PC-9 (cell line): ENCODE measurements at regions of chr3 and their contacts with region 1.

Region 1: GRCh38 chr3:150546226-150547044 is at the starts of genes EIF2A and SERP1:
- DNase-seq: peak; percentile 96 to 99
- H3K4me3 ChIP-seq: peak within 1 kb of the TSS; percentile 82
- H3K27ac ChIP-seq: peak within 1 kb of the TSS; percentile 93
- H3K4me1 ChIP-seq: peaks cover 27% of the 10 kb centered on the region
- H3K27me3 ChIP-seq: no peaks in the 10 kb centered on the region
- CTCF ChIP-seq: no peak
- total RNA-seq, gene EIF2A: 96.4 and 102 TPM in 2 replicates
- total RNA-seq, gene SERP1: 106 and 113 TPM in 2 replicates

Region 2: DNA sequence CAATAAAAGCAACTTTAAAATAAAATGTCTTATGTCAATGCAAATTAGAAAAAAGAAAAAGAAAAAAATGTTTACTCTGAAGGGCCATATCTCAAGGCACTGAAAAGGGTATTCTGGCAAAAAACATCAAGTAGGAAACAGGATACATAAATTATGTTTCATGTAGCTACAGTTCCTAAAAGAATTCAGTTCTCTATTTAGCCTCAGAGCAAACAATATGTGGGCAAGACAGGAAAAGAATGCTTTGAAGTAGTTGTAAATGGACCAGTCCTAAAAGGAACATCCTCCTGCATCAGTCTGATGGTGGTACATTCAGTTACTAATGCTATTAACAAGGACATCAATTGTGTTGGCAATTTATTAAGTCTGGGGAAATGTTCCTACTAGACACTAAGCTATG is 802.3 kb before region 1 on chr3:
- CTCF ChIA-PET with region 1: no interaction called
- POLR2A ChIA-PET with region 1: no interaction called
- intact Hi-C with region 1: no loop called
- DNase-seq: no peak
- H3K4me3 ChIP-seq: no peak overlapping the region
- H3K27ac ChIP-seq: no peak overlapping the region
- H3K4me1 ChIP-seq: no peaks in the 10 kb centered on the region
- H3K27me3 ChIP-seq: no peaks in the 10 kb centered on the region
- CTCF ChIP-seq: no peak

Region 3: DNA sequence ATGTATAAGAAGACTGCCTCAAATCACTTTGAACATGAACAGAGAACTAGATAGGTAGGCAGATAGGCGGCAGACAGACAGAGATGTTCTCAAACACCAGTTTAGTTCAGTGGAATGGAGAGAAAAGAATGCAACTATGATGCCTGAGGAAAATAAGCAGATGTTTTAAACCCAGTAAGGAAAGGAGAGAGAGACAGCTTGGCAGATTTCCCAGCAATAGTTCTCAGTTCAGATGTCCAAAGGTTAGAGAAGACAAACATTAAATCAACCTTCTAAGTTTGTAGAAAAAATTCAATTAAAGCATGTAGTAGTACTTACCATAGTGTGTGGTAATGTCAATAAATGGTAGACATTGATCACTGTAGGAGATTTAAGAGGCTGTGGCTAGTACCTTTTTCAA is 366.1 kb before region 1 on chr3:
- CTCF ChIA-PET with region 1: no interaction called
- POLR2A ChIA-PET with region 1: no interaction called
- intact Hi-C with region 1: no loop called
- DNase-seq: no peak
- H3K4me3 ChIP-seq: no peak overlapping the region
- H3K27ac ChIP-seq: no peak overlapping the region
- H3K4me1 ChIP-seq: peaks cover 18% of the 10 kb centered on the region
- H3K27me3 ChIP-seq: no peaks in the 10 kb centered on the region
- CTCF ChIP-seq: no peak

Region 4: DNA sequence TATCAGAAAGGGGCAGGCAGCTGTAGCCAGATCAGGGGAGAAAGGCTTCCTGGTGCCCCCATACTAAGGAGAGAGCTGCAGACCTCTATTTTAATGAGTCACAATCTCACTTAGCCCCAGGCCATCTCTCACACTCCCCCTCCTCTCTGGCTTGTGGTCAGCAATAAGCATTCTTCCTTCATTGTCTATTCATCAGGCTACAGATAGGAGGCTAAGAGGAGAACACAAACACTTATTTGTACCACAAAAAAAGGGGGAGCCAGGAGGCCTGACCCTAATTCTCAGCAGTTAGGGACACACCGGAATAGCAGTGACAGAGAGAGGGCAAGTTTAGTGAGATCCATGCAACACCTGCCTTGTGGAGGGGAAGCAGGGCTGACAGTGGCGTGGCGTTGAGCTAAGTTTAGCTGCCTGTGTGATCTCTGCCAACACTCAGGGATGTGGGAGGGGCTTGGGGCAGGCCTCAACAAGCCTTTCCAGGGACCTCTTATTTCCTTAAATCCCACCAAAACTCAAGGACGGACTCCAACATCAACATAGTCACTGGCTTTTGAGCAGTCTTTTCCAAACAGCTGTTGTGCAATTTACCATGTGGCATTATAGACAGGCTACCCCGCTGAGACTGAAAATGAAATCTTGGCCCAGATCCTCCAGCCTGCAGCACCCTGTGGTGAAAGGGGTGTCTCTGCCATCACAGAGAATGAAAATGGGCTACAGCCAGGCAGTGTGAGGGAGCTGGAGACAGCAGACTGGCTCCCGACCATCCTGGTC is 330.2 kb before region 1 on chr3:
- CTCF ChIA-PET with region 1: no interaction called
- POLR2A ChIA-PET with region 1: no interaction called
- intact Hi-C with region 1: loop called (anchors 5 kb)
- DNase-seq: peak; percentile 48 to 63
- H3K4me3 ChIP-seq: no peak overlapping the region
- H3K27ac ChIP-seq: no peak overlapping the region
- H3K4me1 ChIP-seq: peaks cover 10% of the 10 kb centered on the region
- H3K27me3 ChIP-seq: no peaks in the 10 kb centered on the region
- CTCF ChIP-seq: no peak; the same call in 1 of the 2 replicates

Region 5: DNA sequence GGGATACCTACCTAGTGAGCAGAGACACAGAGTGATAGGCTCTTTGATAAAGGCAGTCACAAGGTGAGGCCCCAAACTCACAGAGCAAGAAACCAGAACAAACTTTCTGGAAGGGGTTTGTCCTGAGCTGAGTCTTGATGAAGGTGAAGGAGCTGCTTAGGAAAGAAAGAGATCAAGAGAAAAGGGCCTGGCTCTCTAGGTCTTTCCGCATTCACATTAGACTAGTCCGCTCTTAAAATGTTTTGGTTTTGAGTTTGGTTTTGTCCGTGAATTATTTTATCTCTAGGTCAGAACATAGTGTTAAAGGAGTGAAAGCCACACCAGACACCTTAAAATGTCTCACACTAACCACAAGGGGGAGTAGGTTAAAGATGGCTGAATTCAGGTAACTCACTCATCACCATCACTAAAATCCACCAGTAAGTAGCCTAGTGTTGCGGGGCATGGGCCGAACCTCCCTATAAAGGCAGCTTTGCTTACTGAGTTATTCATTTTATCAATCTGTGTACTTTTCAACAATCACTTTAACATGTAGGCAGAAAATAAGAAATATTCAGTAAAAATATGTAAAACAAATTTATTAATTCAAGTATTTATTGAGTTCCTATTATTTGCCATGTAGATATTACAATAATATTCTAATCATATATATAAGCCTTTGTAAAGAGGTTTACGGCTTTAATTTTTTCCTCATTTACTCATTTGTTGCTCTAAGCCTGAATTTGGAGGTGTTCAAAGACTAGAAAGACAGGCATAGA is 259.9 kb before region 1 on chr3:
- CTCF ChIA-PET with region 1: no interaction called
- POLR2A ChIA-PET with region 1: interaction called, 12 read pairs
- intact Hi-C with region 1: no loop called
- DNase-seq: peak; percentile 25 to 42
- H3K4me3 ChIP-seq: no peak overlapping the region
- H3K27ac ChIP-seq: peak overlapping the region; percentile 4; the same call in 1 of the 2 replicates
- H3K4me1 ChIP-seq: peaks cover 11% of the 10 kb centered on the region; the same call in 1 of the 2 replicates
- H3K27me3 ChIP-seq: no peaks in the 10 kb centered on the region
- CTCF ChIP-seq: peak; percentile 79

Region 6: DNA sequence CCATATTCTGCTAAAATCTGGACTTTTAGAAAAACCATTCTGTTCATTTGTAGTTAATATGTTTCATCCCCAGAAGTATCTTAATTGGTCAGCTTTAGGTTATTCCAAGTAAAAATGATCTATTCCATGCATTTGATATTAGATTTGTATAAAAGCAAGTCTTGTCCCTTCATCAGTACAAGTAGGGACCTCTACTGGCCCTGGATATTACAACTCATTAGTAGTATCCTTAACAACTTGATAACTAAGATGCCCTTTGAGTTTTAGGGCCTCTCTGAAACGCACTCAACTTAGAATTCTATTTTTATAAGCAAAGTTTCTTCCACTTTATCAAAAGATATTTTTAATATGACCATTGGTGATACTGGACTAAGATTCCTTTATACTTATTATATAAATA is 31.4 kb after region 1 on chr3:
- CTCF ChIA-PET with region 1: no interaction called
- POLR2A ChIA-PET with region 1: interaction called, 10 read pairs
- intact Hi-C with region 1: no loop called
- DNase-seq: no peak
- H3K4me3 ChIP-seq: no peak overlapping the region
- H3K27ac ChIP-seq: no peak overlapping the region
- H3K4me1 ChIP-seq: no peaks in the 10 kb centered on the region
- H3K27me3 ChIP-seq: no peaks in the 10 kb centered on the region
- CTCF ChIP-seq: no peak; the same call in 1 of the 2 replicates

Region 7: DNA sequence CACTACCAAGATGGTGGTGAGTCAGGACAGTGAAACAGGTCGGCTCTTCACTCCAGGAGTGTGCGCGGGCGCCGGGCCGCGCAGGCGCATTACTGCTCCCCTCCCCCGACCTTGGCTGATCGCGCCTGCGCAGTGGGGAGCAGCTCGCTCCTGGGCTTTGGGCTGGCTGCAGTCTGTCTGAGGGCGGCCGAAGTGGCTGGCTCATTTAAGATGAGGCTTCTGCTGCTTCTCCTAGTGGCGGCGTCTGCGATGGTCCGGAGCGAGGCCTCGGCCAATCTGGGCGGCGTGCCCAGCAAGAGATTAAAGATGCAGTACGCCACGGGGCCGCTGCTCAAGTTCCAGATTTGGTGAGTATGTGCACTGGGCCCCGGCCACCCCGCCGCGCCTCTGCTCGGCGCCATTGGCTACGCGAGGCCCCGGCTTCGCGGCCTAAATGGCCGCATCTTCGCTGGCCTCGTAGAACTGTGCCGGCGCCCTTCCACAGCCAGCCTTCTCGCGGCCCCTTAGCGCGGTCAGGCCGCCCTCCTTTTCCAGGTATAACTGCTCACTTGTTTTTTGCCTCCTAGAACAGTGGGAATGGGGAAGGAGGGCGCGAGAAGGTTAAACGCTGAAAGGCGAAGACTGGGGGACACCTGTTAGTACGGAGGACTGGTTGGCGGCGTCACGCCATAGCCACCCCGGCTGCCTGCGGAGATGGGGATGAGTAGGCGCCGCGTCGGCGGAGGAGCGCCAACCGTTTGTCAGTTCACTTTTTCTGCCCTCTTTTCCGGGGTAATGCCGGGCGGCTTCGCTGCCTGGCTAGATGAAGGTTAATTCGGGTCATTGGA is 56.9 kb after region 1 on chr3 and contains the start of gene SELENOT:
- CTCF ChIA-PET with region 1: no interaction called
- POLR2A ChIA-PET with region 1: interaction called, 3 read pairs
- intact Hi-C with region 1: loop called (anchors 1 kb)
- DNase-seq: peak; percentile 88 to 98
- H3K4me3 ChIP-seq: peak within 1 kb of the TSS; percentile 94
- H3K27ac ChIP-seq: peak within 1 kb of the TSS; percentile 93
- H3K4me1 ChIP-seq: peaks cover 53% of the 10 kb centered on the region
- H3K27me3 ChIP-seq: no peaks in the 10 kb centered on the region
- CTCF ChIP-seq: peak; percentile 31; the same call in 1 of the 2 replicates
- total RNA-seq, gene SELENOT: 59.5 and 84.1 TPM in 2 replicates

Region 8: DNA sequence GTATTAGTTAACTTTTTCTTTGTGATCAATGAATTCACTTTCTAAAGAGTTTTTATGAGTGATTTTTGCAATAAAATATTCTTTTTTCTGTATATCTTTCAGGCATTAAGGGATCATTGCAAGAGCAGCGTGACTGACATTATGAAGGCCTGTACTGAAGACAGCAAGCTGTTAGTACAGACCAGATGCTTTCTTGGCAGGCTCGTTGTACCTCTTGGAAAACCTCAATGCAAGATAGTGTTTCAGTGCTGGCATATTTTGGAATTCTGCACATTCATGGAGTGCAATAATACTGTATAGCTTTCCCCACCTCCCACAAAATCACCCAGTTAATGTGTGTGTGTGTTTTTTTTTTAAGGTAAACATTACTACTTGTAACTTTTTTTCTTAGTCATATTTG is 81.1 kb after region 1 on chr3:
- CTCF ChIA-PET with region 1: no interaction called
- POLR2A ChIA-PET with region 1: no interaction called
- intact Hi-C with region 1: no loop called
- DNase-seq: no peak
- H3K4me3 ChIP-seq: no peak overlapping the region
- H3K27ac ChIP-seq: no peak overlapping the region
- H3K4me1 ChIP-seq: no peaks in the 10 kb centered on the region
- H3K27me3 ChIP-seq: no peaks in the 10 kb centered on the region
- CTCF ChIP-seq: no peak

Region 9: DNA sequence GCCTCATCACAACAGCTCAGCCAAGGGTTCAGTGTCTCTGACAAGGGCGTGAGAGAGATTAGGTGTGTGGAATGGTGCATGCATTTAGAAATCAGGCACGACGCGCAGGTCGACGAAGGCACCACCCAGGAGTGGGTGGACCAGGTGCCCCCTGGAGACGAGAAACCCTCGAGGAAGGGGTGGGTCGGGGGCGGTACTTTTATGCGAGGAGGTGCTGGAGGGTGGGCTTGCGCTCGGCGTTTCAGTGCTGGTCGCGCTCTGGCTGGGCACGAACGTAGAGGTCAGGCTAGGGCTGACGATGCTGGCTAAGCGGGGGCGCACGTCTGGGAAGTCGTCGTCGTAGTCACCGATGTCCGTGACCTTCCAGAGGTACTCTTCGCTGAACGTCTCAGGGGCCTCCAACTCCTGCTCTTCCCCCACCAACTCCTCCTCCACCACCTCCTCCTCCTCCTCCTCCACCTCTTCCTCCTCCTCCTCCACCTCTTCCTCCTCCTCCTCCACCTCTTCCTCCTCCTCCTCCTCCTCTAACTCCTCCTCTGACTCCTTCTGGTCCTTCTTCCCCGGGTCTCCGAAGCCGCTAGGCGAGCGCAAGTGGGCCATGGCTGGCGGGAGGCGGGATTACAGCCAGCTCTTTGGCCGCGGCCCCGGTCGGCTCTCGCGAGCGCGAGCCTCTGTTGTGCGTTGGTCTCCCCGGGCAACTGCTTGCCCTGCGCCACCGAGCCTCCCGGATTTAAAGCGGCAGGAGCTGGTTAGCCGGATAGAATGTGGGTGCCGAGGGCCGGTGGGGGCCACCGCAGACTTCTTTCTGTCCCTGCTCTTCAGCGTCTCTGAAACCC is 157.1 kb after region 1 on chr3 and contains the start of gene ERICH6:
- CTCF ChIA-PET with region 1: no interaction called
- POLR2A ChIA-PET with region 1: interaction called, 4 read pairs
- intact Hi-C with region 1: loop called (anchors 5 kb)
- DNase-seq: peak; percentile 75 to 94
- H3K4me3 ChIP-seq: peak within 1 kb of the TSS; percentile 72
- H3K27ac ChIP-seq: peak within 1 kb of the TSS; percentile 36
- H3K4me1 ChIP-seq: no peaks in the 10 kb centered on the region
- H3K27me3 ChIP-seq: no peaks in the 10 kb centered on the region
- CTCF ChIP-seq: peak; percentile 21; the same call in 1 of the 2 replicates
- total RNA-seq, gene ERICH6: not detected in 2 replicates

Region 10: GRCh38 chr3:151327571-151328198 is 781.2 kb after region 1 on chr3:
- CTCF ChIA-PET with region 1: no interaction called
- POLR2A ChIA-PET with region 1: no interaction called
- intact Hi-C with region 1: no loop called
- DNase-seq: no peak
- H3K4me3 ChIP-seq: no peak overlapping the region
- H3K27ac ChIP-seq: 0 out of 2 replicates have a peak overlapping the region, but pooled peaks have one; percentile 14
- H3K4me1 ChIP-seq: peaks cover 14% of the 10 kb centered on the region
- H3K27me3 ChIP-seq: no peaks in the 10 kb centered on the region
- CTCF ChIP-seq: peak; percentile 81